Caco-2 (cell line): ENCODE measurements at regions of chr11 and their contacts with region 1.

Region 1: GRCh38 chr11:48050313-48050703 is 69.9 kb downstream of the PTPRJ start:
- DNase-seq: no peak
- H3K4me3 ChIP-seq: no peak overlapping the region
- H3K4me3 Mint-ChIP-seq: peak overlapping the region; percentile 43
- H3K27ac Mint-ChIP-seq: peak overlapping the region; percentile 55
- H3K4me1 ChIP-seq: peaks cover 39% of the 10 kb centered on the region
- H3K4me1 Mint-ChIP-seq: peaks cover 39% of the 10 kb centered on the region
- H3K27me3 ChIP-seq: no peaks in the 10 kb centered on the region
- H3K27me3 Mint-ChIP-seq: no peaks in the 10 kb centered on the region
- CTCF ChIP-seq: no peak

Region 2: DNA sequence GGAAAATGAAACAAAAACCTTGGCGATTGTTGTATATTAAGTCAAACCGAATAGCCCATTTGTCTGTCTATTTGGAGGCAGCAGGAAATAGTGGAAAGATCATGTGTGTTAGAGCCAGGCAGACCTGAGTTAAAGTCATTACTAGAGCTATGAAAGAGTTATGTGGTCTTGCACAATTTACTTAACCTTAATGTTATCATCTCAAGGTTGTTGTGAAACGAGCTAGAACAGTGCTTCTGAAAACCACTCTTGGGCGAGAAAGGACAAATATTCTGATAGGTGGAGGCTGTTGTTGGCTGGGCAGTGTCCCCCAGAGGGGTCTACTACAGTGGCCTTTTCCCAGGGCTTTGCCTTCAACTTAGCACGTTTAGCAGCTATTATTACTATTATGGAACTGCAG is 142.1 kb before region 1 on chr11:
- CTCF ChIA-PET with region 1: interaction called, 10 read pairs
- POLR2A ChIA-PET with region 1: no interaction called
- intact Hi-C with region 1: no loop called
- DNase-seq: no peak
- H3K4me3 ChIP-seq: no peak overlapping the region
- H3K4me3 Mint-ChIP-seq: no peak overlapping the region
- H3K27ac Mint-ChIP-seq: no peak overlapping the region
- H3K4me1 ChIP-seq: peaks cover 5% of the 10 kb centered on the region; the same call in 1 of the 2 replicates
- H3K4me1 Mint-ChIP-seq: peaks cover 7% of the 10 kb centered on the region
- H3K27me3 ChIP-seq: no peaks in the 10 kb centered on the region
- H3K27me3 Mint-ChIP-seq: no peaks in the 10 kb centered on the region
- CTCF ChIP-seq: no peak

Region 3: DNA sequence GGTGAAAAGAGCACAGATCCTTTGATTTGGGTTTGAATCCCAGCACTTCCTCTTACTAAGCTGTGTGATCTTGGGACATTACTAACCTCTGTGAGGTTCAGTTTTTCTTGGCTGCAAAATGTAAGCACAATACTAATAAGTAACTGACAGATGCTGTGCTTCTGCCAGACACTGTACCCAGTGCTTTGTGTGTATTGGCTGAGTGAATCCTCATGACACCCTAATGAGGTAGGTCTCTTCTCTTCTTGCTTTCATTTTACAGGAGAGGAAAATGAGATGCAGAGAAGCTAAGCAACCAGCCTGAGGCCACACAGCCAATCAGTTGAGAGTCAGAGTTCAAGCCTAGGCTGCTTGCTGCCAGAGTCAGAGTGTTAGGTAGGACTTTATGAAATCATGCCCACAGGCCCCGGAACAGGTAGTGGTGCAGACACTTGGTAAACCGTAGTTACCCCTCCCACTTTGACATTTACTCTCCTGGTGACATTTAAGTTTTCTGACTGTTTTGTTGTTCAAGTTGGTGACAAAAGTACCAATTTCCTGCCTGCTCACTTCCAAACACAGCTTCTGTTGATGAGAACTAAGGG is 48.8 kb before region 1 on chr11:
- CTCF ChIA-PET with region 1: no interaction called
- POLR2A ChIA-PET with region 1: no interaction called
- intact Hi-C with region 1: loop called (anchors 2 kb)
- DNase-seq: no peak
- H3K4me3 ChIP-seq: no peak overlapping the region
- H3K4me3 Mint-ChIP-seq: no peak overlapping the region
- H3K27ac Mint-ChIP-seq: no peak overlapping the region
- H3K4me1 ChIP-seq: peaks cover 35% of the 10 kb centered on the region
- H3K4me1 Mint-ChIP-seq: peaks cover 35% of the 10 kb centered on the region
- H3K27me3 ChIP-seq: no peaks in the 10 kb centered on the region
- H3K27me3 Mint-ChIP-seq: no peaks in the 10 kb centered on the region
- CTCF ChIP-seq: no peak

Region 4: DNA sequence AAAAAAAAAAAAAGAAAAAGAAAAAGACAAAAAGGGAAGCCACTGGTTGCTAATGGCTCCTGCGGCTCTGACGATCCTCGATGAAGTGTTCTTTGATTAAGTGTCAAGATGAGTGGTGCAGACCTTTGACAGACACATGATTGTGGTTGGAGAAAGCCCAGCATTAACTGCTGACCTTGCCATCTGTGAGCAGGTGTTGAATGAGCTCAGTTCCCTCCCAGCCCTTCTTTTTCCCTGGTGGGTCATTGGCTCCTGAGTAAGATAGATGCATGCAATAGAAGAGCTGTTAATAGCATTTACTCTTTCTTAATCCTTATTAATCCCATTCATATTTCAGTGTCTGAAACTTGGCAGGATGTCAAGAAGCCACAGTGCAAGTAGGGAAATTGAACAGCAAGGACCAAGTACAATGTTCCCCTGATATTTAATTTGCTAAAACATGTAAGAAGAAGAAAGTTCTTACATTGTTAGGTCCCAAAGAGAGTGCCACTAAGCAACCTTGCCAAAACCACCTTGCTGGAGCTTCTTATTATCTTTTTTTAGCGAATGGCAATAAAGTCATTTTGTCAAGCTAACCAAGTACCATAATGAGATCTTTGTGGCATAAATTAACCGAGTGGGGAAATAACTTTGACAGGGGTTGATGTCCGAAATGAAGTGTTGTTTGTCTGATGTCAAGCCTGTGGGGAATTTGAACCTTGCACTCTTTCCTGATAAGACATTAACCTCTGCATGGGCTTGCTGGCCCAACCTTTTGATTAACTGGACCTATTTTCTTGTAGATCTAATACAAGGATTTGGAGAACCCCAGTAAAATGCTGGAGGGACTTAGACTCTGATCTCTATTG is 43.7 kb after region 1 on chr11:
- CTCF ChIA-PET with region 1: no interaction called
- POLR2A ChIA-PET with region 1: no interaction called
- intact Hi-C with region 1: loop called (anchors 1 kb)
- DNase-seq: peak; percentile 40 to 53
- H3K4me3 ChIP-seq: no peak overlapping the region
- H3K4me3 Mint-ChIP-seq: peak overlapping the region; percentile 13
- H3K27ac Mint-ChIP-seq: peak overlapping the region; percentile 53
- H3K4me1 ChIP-seq: peaks cover 48% of the 10 kb centered on the region
- H3K4me1 Mint-ChIP-seq: peaks cover 35% of the 10 kb centered on the region
- H3K27me3 ChIP-seq: no peaks in the 10 kb centered on the region
- H3K27me3 Mint-ChIP-seq: no peaks in the 10 kb centered on the region
- CTCF ChIP-seq: no peak

Region 5: DNA sequence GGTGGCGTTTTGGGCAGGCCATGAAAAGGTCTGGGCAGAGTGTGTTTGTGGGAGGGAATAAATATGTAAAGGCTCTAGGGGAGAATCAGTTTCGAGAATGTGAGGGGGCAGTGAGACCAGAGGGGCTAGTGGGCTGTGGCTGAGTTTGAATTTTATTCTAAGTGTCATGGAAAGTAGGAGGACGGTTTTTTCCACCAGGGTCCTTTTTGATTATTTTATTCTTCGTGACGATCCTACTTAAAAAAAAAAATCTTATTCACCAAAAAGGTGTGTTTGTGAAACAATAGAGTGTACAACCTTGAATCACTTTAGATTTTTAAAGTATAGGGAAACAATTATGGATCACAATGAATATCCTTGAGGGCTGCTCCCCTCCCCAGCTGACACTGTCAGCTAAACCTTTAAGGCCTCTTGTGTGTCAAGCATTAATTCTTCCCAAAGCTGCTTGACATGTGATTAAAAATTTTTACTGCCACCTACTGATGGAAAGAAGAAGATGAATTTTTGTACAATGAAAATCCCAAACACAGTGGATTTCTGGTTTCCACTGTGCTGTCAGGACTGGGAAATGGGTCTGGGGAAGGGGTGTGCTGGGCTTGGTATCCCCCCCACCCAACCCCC is 58.8 kb after region 1 on chr11:
- CTCF ChIA-PET with region 1: interaction called, 4 read pairs
- POLR2A ChIA-PET with region 1: no interaction called
- intact Hi-C with region 1: loop called (anchors 1 kb)
- DNase-seq: peak in 1 of 2 experiments; percentile 27
- H3K4me3 ChIP-seq: no peak overlapping the region
- H3K4me3 Mint-ChIP-seq: no peak overlapping the region
- H3K27ac Mint-ChIP-seq: no peak overlapping the region
- H3K4me1 ChIP-seq: peaks cover 11% of the 10 kb centered on the region; the same call in 1 of the 2 replicates
- H3K4me1 Mint-ChIP-seq: peaks cover 7% of the 10 kb centered on the region
- H3K27me3 ChIP-seq: no peaks in the 10 kb centered on the region
- H3K27me3 Mint-ChIP-seq: no peaks in the 10 kb centered on the region
- CTCF ChIP-seq: peak; percentile 30 to 44